ENCODE measurements at regions of chr7 and their contacts with region 1.

Region 1: DNA sequence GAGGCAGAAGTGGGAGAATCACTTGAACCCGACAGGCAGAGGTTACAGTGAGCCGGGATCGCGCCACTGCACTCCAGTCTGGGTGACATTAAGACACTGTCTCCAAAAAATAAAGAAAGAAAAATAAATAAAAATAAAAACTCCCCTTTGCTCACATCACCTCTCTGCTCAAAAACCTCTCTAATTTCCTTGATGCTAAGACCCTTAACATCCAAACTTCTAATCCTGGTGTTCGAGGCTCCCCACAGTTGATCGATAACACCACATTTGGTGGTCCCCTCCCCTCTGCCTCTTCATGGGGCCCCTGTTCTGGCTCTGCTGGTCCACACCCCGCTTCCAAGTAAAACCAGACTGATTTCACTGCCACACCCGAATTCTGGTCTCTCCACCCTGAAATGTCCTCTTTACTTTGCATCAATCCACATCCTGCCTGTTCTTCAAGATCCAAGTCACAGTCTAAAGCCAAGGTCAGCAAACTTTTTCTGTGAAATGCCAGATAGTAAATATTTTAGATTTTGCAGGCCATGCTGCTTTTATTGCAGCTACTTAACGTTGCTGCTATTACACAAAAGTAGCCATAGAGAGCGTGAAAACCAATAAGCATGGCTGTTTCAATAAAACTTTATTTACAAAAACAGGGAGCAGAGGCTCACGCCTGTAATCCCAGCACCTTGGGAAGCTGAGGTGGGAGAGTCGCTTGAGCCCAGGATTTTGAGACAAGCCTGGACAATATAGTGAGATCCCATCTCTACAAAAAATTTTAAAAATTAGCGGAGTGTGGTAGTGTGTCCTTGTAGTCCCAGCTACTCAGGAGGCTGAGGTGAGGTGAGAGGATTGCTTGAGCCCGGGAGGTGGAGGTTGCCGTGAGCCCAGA is 11.8 kb downstream of the MOSPD3 start:
- DNase-seq: no peak
- ATAC-seq: no peak
- H3K4me3 ChIP-seq: no peak overlapping the region
- H3K27ac ChIP-seq: no peak overlapping the region
- H3K4me1 ChIP-seq: no peaks in the 10 kb centered on the region
- H3K27me3 ChIP-seq: no peaks in the 10 kb centered on the region

Region 2: GRCh38 chr7:100570954-100571828 is 53.0 kb before region 1 on chr7:
- intact Hi-C with region 1: no loop called
- DNase-seq: peak in 1 of 3 donors; percentile 56
- ATAC-seq: no peak
- H3K4me3 ChIP-seq: no peak overlapping the region
- H3K27ac ChIP-seq: no peak overlapping the region
- H3K4me1 ChIP-seq: peaks cover 2% of the 10 kb centered on the region
- H3K27me3 ChIP-seq: no peaks in the 10 kb centered on the region

Region 3: GRCh38 chr7:100691676-100692577 is 67.7 kb after region 1 on chr7:
- intact Hi-C with region 1: loop called in 1 of 4 experiments (anchors 5 kb)
- DNase-seq: peak; percentile 77 to 92 (median 92)
- ATAC-seq: peak; percentile 82 to 84
- H3K4me3 ChIP-seq: no peak overlapping the region
- H3K27ac ChIP-seq: peak overlapping the region; percentile 1
- H3K4me1 ChIP-seq: peaks cover 6% of the 10 kb centered on the region
- H3K27me3 ChIP-seq: no peaks in the 10 kb centered on the region

Region 4: GRCh38 chr7:100874577-100875355 is 250.6 kb after region 1 on chr7 and contains the start of gene SRRT:
- intact Hi-C with region 1: no loop called
- DNase-seq: peak; percentile 98 to 99 (median 99)
- ATAC-seq: peak; percentile 96
- H3K4me3 ChIP-seq: peak within 1 kb of the TSS; percentile 90
- H3K27ac ChIP-seq: peak within 1 kb of the TSS; percentile 99
- H3K4me1 ChIP-seq: no peaks in the 10 kb centered on the region
- H3K27me3 ChIP-seq: no peaks in the 10 kb centered on the region
- total RNA-seq, gene SRRT: 79.1 to 88.0 (median 82.2) TPM

Region 5: GRCh38 chr7:101630591-101630990 is 1006.4 kb after region 1 on chr7:
- intact Hi-C with region 1: no loop called
- DNase-seq: peak in 1 of 3 donors; percentile 9
- ATAC-seq: peak in 1 of 2 donors; percentile 9
- H3K4me3 ChIP-seq: no peak overlapping the region
- H3K27ac ChIP-seq: no peak overlapping the region
- H3K4me1 ChIP-seq: peaks cover 1% of the 10 kb centered on the region
- H3K27me3 ChIP-seq: no peaks in the 10 kb centered on the region